ENCODE measurements at regions of chr12 and their contacts with region 1.

Region 1: GRCh38 chr12:109462710-109463692 is 14.1 kb downstream of the KCTD10 start:
- DNase-seq: peak; percentile 74 to 90
- H3K4me3 ChIP-seq: peak overlapping the region; percentile 31; the same call in 1 of the 2 replicates
- H3K27ac ChIP-seq: peak overlapping the region; percentile 94
- H3K4me1 ChIP-seq: peaks cover 53% of the 10 kb centered on the region
- H3K27me3 ChIP-seq: no peaks in the 10 kb centered on the region
- CTCF ChIP-seq: no peak

Region 2: GRCh38 chr12:109477185-109477962 is 14.4 kb after region 1 on chr12 and contains the starts of genes KCTD10 and UBE3B:
- CTCF ChIA-PET with region 1: no interaction called
- POLR2A ChIA-PET with region 1: interaction called, 6 read pairs
- intact Hi-C with region 1: loop called (anchors 2 kb)
- DNase-seq: peak; percentile 74 to 85
- H3K4me3 ChIP-seq: peak within 1 kb of the TSS; percentile 90
- H3K27ac ChIP-seq: peak within 1 kb of the TSS; percentile 63
- H3K4me1 ChIP-seq: peaks cover 17% of the 10 kb centered on the region
- H3K27me3 ChIP-seq: no peaks in the 10 kb centered on the region
- CTCF ChIP-seq: no peak
- total RNA-seq, gene KCTD10: 37.4 and 45.9 TPM in 2 replicates
- total RNA-seq, gene UBE3B: 45.4 and 48.0 TPM in 2 replicates

Region 3: DNA sequence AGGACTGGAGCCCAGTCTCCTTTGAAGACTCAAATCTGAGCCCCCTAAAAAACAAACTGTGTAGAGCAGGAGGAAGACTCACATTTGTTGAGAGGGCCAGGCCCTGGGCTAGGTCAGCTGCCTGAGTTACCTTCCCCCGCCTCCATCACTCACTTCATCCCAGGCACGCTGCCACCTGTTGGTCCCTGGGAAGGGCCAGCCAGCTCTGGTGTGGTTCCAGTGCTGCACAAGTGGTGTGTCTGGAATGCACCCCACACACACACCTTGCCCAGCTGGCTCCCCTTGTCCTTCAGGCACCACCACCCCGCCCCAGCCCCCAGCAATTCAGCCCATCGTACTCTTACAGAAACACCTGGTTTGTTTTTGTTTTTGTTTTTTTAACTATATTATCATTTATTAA is 119.7 kb after region 1 on chr12:
- CTCF ChIA-PET with region 1: no interaction called
- POLR2A ChIA-PET with region 1: interaction called, 8 read pairs
- intact Hi-C with region 1: loop called (anchors 2 kb)
- DNase-seq: peak; percentile 41 to 79
- H3K4me3 ChIP-seq: no peak overlapping the region
- H3K27ac ChIP-seq: peak overlapping the region; percentile 48; the same call in 1 of the 2 replicates
- H3K4me1 ChIP-seq: peaks cover 37% of the 10 kb centered on the region
- H3K27me3 ChIP-seq: no peaks in the 10 kb centered on the region
- CTCF ChIP-seq: no peak; the same call in 1 of the 2 replicates

Region 4: GRCh38 chr12:109775172-109775881 is 312.3 kb after region 1 on chr12:
- CTCF ChIA-PET with region 1: no interaction called
- POLR2A ChIA-PET with region 1: no interaction called
- intact Hi-C with region 1: no loop called
- DNase-seq: peak; percentile 57 to 68
- H3K4me3 ChIP-seq: no peak overlapping the region
- H3K27ac ChIP-seq: no peak overlapping the region
- H3K4me1 ChIP-seq: peaks cover 26% of the 10 kb centered on the region
- H3K27me3 ChIP-seq: no peaks in the 10 kb centered on the region
- CTCF ChIP-seq: peak; percentile 91

Measured in PC-9 (cell line).